Posterior cingulate gyrus (tissue), 11 donors: ENCODE measurements at regions of chr22 and their contacts with region 1.

Region 1: DNA sequence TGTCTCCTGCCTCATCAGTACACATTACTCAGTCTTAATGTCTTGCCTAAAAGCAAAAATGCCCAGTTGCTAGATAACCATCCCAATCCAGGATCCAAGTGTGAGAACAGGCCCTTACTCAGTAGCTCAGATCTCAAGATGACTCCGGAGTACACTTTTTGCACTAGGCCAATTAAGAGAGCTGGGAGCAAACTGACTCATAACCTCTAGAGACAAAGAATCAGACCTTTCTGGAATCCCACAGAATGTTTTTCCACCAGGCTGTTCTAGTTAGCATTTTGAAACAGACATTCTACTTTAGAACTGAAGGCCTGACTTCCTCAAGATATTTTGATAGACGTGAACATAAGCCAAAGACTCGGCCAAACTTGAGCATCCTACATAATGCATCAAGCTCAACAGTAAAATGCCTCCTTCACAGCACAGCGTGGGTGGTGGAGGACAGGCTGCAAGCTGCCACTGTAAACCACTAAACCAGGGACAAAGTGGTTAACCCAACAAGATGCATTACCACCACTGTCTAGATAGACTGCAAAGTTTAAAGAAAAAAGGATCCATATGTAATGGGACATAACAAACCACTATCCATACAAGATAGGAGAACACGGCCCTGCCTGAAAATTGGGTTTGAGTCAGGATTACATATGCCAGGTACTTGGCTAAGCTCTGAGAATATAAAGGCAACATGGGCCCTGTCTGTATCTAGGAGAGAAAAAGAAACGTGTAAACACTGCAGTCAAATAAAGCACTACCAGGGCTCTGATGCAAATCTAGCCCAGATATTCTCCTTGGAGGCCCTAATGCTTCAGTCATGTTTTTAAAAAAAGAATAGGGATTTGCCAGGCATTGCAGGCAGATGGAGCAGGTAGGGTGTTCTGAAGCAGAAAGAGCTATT is 48.3 kb downstream of the MYH9 start:
- DNase-seq: no peak

Region 2: DNA sequence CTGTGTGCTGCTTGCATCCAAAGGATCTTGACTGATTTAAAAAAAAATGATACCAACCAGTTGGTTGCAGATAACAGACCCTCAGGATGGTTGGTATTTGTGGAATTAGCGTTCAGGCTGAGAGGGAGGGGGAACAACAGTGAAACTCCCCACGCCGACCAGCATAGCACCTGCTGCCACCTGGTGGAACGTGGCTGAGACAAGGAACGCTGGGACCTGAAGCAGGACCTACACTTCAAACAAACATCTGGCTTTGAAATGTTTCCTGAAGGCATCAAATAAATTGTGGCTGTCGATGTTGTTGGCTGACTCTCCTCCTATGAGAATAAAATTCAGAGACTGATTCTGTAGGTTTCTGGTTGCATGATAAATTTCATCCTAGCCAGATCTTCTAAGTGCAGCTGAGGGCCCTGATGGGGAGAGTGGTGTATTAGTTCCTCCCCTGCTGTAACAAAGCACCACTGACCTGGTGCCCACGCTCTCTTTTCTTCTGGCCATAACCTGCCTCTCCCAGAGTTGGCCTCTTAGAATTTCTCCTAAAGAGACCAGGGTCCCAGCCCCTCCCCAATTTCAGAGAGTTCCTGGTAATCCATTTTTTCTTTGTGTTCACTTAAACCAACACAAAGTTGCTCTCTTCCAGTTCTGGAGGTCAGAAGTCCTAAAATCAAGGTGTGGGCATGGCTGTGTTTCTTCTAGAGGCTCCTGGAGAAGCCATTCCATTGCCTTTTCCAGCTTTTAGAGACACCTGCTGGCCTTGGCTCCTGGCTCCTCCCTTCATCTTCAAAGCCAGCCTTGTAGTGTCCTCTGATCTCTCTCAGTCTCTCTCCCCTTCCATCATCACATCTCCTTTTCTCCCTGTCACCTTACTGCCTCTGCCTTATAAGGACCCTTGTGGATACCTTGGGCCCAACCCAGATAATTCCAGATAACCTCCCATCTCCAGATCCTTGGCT is 117.3 kb before region 1 on chr22:
- intact Hi-C with region 1: no loop called
- DNase-seq: peak in 8 of 10 donors; percentile 41 to 91 (median 54)

Region 3: GRCh38 chr22:36387752-36388518 is 48.5 kb after region 1 on chr22 and contains the start of gene MYH9:
- intact Hi-C with region 1: loop called (anchors 5 kb)
- DNase-seq: peak; percentile 98 to 100 (median 99)